Dendritic cell treated with granulocyte-macrophage colony-stimulating factor and Interleukin-4, amounts not matched to agents 40 ng/mL and 50 ng/mL, for 4 days (primary cell): ENCODE measurements at regions of chr7 and their contacts with region 1.

Region 1: GRCh38 chr7:139284241-139284896 is 53.3 kb downstream of the UBN2 start:
- H3K4me3 Mint-ChIP-seq: no peak overlapping the region
- H3K27ac Mint-ChIP-seq: no peak overlapping the region
- H3K4me1 Mint-ChIP-seq: no peaks in the 10 kb centered on the region
- H3K27me3 Mint-ChIP-seq: no peaks in the 10 kb centered on the region

Region 2: DNA sequence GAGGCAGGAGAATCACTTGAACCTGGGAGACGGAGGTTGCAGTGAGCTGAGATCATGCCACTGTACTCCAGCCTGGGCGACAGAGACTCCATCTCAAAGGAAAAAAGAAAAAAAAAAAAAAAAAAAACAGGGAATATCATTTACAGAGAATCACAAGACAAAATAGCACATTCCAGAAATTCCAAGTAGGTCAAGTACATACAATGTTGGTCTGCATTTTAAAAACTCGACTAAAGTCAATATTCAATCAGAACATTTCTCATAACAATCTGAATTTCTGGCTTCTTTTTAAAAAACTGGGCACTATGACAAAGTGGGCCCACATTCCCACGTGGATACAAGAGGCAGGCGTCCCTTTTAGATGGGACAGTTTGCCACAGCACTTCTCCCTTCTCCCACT is 261.3 kb before region 1 on chr7:
- intact Hi-C with region 1: no loop called
- H3K4me3 Mint-ChIP-seq: no peak overlapping the region
- H3K27ac Mint-ChIP-seq: no peak overlapping the region
- H3K4me1 Mint-ChIP-seq: peaks cover 6% of the 10 kb centered on the region
- H3K27me3 Mint-ChIP-seq: peaks cover 2% of the 10 kb centered on the region

Region 3: GRCh38 chr7:139297795-139298194 is 13.4 kb after region 1 on chr7:
- intact Hi-C with region 1: no loop called
- H3K4me3 Mint-ChIP-seq: no peak overlapping the region
- H3K27ac Mint-ChIP-seq: no peak overlapping the region
- H3K4me1 Mint-ChIP-seq: no peaks in the 10 kb centered on the region
- H3K27me3 Mint-ChIP-seq: no peaks in the 10 kb centered on the region

Region 4: DNA sequence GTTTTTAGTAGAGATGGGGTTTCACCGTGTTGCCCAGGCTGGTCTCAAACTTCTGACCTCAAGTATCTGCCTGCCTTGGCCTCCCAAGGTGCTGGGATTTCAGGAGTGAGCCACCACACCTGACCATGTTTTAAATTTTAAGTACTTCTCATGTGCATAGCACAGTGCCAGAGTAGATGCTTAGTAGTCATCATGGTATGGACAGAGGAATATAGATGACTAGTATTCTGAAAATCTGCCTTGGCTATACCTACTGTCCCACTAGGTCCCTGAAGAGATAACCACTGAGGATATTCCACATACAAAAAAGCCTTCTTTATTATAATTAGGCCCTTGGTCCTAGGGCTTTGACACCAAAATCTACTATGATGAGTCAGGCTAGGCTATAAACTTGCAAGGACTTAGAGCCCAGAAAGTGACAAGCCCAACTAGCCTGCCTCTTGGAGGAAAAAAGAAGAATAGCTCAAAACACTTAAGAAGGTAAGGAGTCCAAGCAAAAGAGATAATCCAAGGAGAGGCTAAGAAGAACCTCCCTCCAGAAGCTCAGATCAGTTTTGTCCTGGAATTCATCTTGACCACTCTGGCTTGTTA is 109.3 kb after region 1 on chr7:
- intact Hi-C with region 1: loop called (anchors 10 kb)
- H3K4me3 Mint-ChIP-seq: no peak overlapping the region
- H3K27ac Mint-ChIP-seq: no peak overlapping the region
- H3K4me1 Mint-ChIP-seq: peaks cover 12% of the 10 kb centered on the region
- H3K27me3 Mint-ChIP-seq: no peaks in the 10 kb centered on the region